ENCODE measurements at regions of chr16 and their contacts with region 1.

Region 1: GRCh38 chr16:85420501-85421337 is 192.4 kb upstream of the GSE1 start:
- DNase-seq: no peak
- H3K4me3 ChIP-seq: no peak overlapping the region
- H3K27ac ChIP-seq: no peak overlapping the region
- H3K4me1 ChIP-seq: peaks cover 0 to 3% of the 10 kb centered on the region in 2 donors
- H3K27me3 ChIP-seq: no peaks in the 10 kb centered on the region
- CTCF ChIP-seq: peak; percentile 99 to 100 (median 100)

Region 2: DNA sequence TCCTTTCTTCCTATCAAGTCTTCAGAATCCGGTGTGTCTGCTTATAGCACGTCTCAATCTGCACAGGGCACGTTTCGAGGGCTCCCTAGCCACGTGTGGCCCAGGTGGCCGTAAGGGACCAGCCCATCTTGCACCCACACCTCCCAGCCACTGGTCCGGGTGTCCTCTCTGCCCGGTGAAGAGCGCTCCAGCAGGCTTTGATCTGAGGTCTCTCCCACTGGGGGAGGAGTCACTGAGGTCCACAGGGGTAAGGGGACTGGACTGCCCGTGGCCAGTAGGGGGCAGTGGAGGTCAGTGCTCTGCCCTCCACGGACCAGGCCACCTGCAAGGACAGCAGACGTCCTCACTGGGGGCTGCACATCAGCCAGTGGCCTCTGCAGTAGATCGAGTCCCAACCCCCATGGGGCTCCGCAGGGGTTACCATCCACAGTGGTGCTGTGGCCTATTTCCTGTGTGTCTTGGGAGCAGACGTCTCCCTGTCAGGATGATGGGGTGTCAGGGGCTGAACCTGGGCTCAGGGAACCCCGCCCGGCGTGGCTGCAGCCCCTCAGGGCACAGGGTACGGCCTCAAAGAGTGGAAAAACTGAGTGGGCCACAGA is 104.3 kb before region 1 on chr16:
- intact Hi-C with region 1: loop called (anchors 10 kb)
- DNase-seq: peak in 1 of 2 donors; percentile 79
- H3K4me3 ChIP-seq: no peak overlapping the region
- H3K27ac ChIP-seq: no peak overlapping the region
- H3K4me1 ChIP-seq: peaks cover 6 to 22% of the 10 kb centered on the region in 2 donors
- H3K27me3 ChIP-seq: no peaks in the 10 kb centered on the region
- CTCF ChIP-seq: peak; percentile 81 to 84 (median 83)

Region 3: GRCh38 chr16:85393674-85394483 is 26.8 kb before region 1 on chr16:
- intact Hi-C with region 1: loop called (anchors 2 kb)
- DNase-seq: peak in 1 of 2 donors; percentile 67
- H3K4me3 ChIP-seq: no peak overlapping the region
- H3K27ac ChIP-seq: peak overlapping the region in 1 of 2 donors; percentile 9
- H3K4me1 ChIP-seq: peaks cover 17 to 26% of the 10 kb centered on the region in 2 donors
- H3K27me3 ChIP-seq: no peaks in the 10 kb centered on the region
- CTCF ChIP-seq: peak; percentile 63 to 69 (median 67)